CD8-positive, alpha-beta T cell (primary cell): ENCODE measurements at regions of chr16 and their contacts with region 1.

Region 1: DNA sequence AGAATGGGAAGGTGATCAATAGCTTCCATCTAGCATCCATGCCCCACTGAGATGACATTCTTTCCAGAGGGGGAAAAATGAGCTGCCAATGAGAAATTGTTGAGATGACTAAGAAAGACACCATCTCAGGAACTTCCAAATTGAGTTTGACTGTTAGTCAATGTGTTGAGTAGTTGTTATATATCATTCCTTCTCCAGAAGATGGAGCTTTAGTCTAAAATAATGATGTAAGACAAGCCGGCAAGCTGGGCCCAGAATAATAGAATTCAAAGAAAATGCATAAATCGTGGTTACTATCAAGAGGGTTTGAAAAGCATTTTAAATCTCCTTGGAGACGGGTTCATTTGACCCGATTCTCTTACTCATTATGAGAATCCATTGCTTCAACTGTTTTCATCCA is 71.0 kb upstream of the ATF7IP2 start:
- DNase-seq: peak in 2 of 9 experiments; percentile 47 to 61
- ATAC-seq: peak; percentile 46
- H3K4me3 ChIP-seq: no peak overlapping the region
- H3K4me3 Mint-ChIP-seq: no peak overlapping the region
- H3K27ac ChIP-seq: no peak overlapping the region
- H3K27ac Mint-ChIP-seq: no peak overlapping the region
- H3K4me1 ChIP-seq: peaks cover 5% of the 10 kb centered on the region
- H3K4me1 Mint-ChIP-seq: peaks cover 22% of the 10 kb centered on the region
- H3K27me3 ChIP-seq: no peaks in the 10 kb centered on the region
- H3K27me3 Mint-ChIP-seq: no peaks in the 10 kb centered on the region
- CTCF ChIP-seq: peak; percentile 68

Region 2: DNA sequence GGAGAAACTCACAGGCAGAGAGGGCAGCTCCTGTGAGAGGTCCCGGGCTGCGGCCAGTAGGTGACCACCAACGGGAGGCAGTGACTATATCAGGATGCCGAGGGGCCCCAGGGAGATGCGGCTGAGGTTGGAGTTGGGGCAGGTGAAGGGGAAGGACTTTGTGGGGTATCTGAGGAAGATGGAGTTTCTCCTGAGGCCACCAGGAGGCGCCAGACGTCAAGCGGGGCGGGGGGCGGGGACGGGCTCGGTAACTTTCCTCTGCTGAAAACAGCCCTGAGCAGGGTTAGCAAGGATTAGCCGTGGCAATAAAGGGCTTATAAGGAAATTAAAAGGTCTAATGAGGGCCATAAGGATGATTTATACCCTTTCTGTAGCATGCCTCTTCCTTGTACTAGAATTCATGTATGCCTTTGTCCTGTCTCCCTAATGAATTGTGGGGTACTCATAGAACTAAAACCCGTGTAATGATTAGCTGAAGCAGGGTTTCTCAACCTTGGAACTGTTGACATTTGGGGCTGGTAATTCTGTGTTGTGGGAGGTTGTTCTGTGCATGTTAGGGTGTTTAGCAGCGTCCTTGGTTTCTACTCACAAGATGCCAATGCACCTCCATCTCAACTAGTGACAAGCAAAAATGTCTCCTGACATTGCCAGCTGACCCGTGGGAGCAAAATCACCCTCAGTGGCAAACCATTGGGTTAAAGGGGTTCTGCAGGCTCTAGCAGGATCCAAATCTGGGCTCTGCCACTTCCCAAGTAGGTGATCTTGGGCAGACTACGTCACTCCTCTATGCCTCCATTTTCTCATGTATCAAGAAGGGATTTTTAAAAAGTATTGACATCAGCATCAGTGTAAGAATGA is 57.8 kb before region 1 on chr16:
- CTCF ChIA-PET with region 1: interaction called, 7 read pairs
- POLR2A ChIA-PET with region 1: no interaction called
- intact Hi-C with region 1: loop called in 1 of 2 experiments (anchors 1 kb)
- DNase-seq: peak; percentile 9 to 69 (median 44)
- ATAC-seq: peak; percentile 69
- H3K4me3 ChIP-seq: no peak overlapping the region
- H3K4me3 Mint-ChIP-seq: no peak overlapping the region
- H3K27ac ChIP-seq: no peak overlapping the region
- H3K27ac Mint-ChIP-seq: no peak overlapping the region
- H3K4me1 ChIP-seq: peaks cover 4% of the 10 kb centered on the region
- H3K4me1 Mint-ChIP-seq: peaks cover 7% of the 10 kb centered on the region
- H3K27me3 ChIP-seq: no peaks in the 10 kb centered on the region
- H3K27me3 Mint-ChIP-seq: no peaks in the 10 kb centered on the region
- CTCF ChIP-seq: peak; percentile 81

Region 3: GRCh38 chr16:10343124-10343760 is 28.4 kb after region 1 on chr16:
- CTCF ChIA-PET with region 1: no interaction called
- POLR2A ChIA-PET with region 1: no interaction called
- intact Hi-C with region 1: no loop called
- DNase-seq: no peak
- ATAC-seq: no peak
- H3K4me3 ChIP-seq: no peak overlapping the region
- H3K4me3 Mint-ChIP-seq: no peak overlapping the region
- H3K27ac ChIP-seq: no peak overlapping the region
- H3K27ac Mint-ChIP-seq: no peak overlapping the region
- H3K4me1 ChIP-seq: no peaks in the 10 kb centered on the region
- H3K4me1 Mint-ChIP-seq: peaks cover under 1% of the 10 kb centered on the region
- H3K27me3 ChIP-seq: no peaks in the 10 kb centered on the region
- H3K27me3 Mint-ChIP-seq: no peaks in the 10 kb centered on the region
- CTCF ChIP-seq: no peak

Region 4: DNA sequence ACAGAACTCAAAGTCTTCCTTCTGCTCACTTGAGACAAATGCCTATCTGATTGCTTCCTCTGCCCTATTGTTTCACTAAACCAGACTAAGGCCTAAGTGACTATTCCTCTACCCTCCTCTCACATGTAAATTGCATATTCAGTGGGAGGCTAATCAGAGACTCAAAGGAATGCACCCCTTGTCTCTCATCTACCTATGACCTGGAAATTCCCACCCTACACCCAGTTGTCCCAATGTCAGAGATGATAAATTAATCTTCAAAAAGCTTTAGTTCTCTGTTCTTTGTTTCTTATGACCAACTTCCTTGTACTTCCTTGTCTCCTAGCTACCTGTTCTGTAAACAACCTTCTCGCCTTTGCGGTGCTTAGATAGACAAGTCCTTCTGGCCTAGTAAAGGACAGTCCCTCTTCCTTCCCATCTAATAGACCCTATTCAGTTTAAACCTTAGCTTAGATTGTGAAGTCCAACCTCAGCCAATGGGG is 189.6 kb after region 1 on chr16:
- CTCF ChIA-PET with region 1: interaction called, 147 read pairs
- POLR2A ChIA-PET with region 1: interaction called, 8 read pairs
- intact Hi-C with region 1: loop called (anchors 1 kb)
- DNase-seq: no peak
- ATAC-seq: no peak
- H3K4me3 ChIP-seq: no peak overlapping the region
- H3K4me3 Mint-ChIP-seq: no peak overlapping the region
- H3K27ac ChIP-seq: no peak overlapping the region
- H3K27ac Mint-ChIP-seq: no peak overlapping the region
- H3K4me1 ChIP-seq: no peaks in the 10 kb centered on the region
- H3K4me1 Mint-ChIP-seq: peaks cover 6% of the 10 kb centered on the region
- H3K27me3 ChIP-seq: no peaks in the 10 kb centered on the region
- H3K27me3 Mint-ChIP-seq: no peaks in the 10 kb centered on the region
- CTCF ChIP-seq: no peak